Ovary (tissue), 10 donors: ENCODE measurements at regions of chr3 and their contacts with region 1.

Region 1: GRCh38 chr3:123385981-123386380 is 62.9 kb downstream of the ADCY5 start:
- DNase-seq: peak in 4 of 5 donors; percentile 50 to 65 (median 57)
- H3K4me3 ChIP-seq: no peak overlapping the region
- H3K27ac ChIP-seq: peak overlapping the region in 1 of 2 donors; percentile 35
- H3K4me1 ChIP-seq: peaks cover 51% of the 10 kb centered on the region
- H3K27me3 ChIP-seq: no peaks in the 10 kb centered on the region
- CTCF ChIP-seq: no peak
- EP300 ChIP-seq: no peak
- POLR2A ChIP-seq: no peak

Region 2: GRCh38 chr3:122858373-122858772 is 527.6 kb before region 1 on chr3:
- intact Hi-C with region 1: loop called in 1 of 4 experiments (anchors 5 kb)
- DNase-seq: no peak
- H3K4me3 ChIP-seq: no peak overlapping the region
- H3K27ac ChIP-seq: no peak overlapping the region
- H3K4me1 ChIP-seq: no peaks in the 10 kb centered on the region
- H3K27me3 ChIP-seq: no peaks in the 10 kb centered on the region
- CTCF ChIP-seq: no peak
- EP300 ChIP-seq: no peak
- POLR2A ChIP-seq: no peak

Region 3: DNA sequence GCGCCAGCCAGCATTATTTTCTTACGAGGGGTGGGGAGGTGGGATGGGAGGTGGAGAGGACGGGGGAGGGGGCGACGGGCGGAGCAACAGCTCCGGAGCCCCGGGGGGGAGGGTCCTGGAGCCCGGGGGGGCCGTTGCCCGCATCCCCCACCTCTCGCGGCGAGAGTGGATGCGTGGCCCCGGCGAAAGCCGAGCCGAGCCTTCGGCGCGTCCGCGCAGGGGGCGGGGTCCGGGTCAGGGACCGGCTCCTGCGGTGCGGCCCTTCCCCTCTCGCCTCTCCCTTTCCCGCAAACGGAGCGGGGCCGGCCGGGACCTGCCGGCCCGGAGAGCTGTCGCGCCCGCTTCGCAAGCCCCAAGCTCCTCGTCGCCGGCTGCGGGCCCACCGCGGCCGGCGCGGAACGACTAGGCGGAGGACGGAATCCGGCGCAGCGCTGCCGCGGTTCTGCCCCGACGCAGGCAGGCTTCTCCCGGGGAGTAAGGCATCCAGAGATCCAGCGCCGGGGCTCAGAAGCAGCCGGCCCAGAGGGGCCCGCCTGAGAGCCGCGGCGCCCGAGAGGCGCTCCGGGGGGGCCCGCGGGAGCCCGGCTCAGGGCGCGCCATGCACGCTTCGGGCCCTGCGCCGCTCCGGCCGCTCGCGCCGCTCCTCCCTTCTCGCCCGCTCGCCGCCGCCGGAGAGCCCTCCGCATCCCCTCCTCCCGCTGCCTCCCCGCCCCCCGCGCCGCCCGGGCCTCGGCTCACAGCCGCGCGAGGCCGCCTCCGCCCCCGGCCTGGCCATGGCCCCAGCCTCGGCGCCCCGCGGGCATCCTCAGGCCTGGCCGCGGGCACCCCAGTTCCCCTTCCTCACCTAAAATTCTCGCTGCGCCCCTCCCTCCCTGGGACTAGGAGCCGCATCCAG is 63.4 kb after region 1 on chr3:
- intact Hi-C with region 1: loop called in 1 of 4 experiments (anchors 10 kb)
- DNase-seq: peak; percentile 46 to 71 (median 67)
- H3K4me3 ChIP-seq: peak overlapping the region; percentile 75
- H3K27ac ChIP-seq: peak overlapping the region; percentile 91 to 95
- H3K4me1 ChIP-seq: peaks cover 16% of the 10 kb centered on the region
- H3K27me3 ChIP-seq: no peaks in the 10 kb centered on the region
- CTCF ChIP-seq: no peak
- EP300 ChIP-seq: no peak
- POLR2A ChIP-seq: peak; percentile 18